H1 (cell line): ENCODE measurements at regions of chr1 and their contacts with region 1.

Region 1: GRCh38 chr1:171801487-171801891 is 20.0 kb downstream of the METTL13 start:
- DNase-seq: no peak
- H3K4me3 ChIP-seq: no peak overlapping the region
- H3K27ac ChIP-seq: no peak overlapping the region
- H3K4me1 ChIP-seq: peaks cover 0 to 11% (median 5%) of the 10 kb centered on the region in 4 experiments; a peak in 3 of 7 replicates
- H3K27me3 ChIP-seq: no peaks in the 10 kb centered on the region
- CTCF ChIP-seq: peak in 2 of 3 experiments; percentile 75 to 87; a peak in 3 of 4 replicates
- EP300 ChIP-seq: no peak
- POLR2A ChIP-seq: no peak
- RAD21 ChIP-seq: peak; percentile 87 to 94

Region 2: DNA sequence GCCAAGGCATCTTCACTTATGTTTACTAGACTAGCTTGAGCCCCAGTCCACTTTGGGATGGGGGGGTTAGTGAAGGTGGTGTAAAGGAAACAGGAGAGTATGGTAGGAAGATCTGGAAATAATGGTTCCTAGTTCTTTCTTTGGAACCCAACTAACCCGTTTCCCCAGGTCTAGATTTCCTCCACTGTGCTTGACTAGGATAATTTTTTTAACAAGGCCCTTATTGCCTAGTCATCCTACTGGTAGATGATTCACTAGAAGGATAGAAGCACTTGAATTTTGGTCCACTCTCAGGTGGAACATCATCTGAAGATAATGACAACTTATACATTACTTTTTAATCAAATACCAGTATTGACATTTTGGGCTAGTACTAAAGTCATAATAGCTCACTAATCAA is 225.3 kb before region 1 on chr1:
- CTCF ChIA-PET with region 1: no interaction called
- POLR2A ChIA-PET with region 1: no interaction called
- DNase-seq: no peak
- H3K4me3 ChIP-seq: no peak overlapping the region
- H3K27ac ChIP-seq: no peak overlapping the region
- H3K4me1 ChIP-seq: no peaks in the 10 kb centered on the region
- H3K27me3 ChIP-seq: no peaks in the 10 kb centered on the region
- CTCF ChIP-seq: no peak
- EP300 ChIP-seq: no peak
- POLR2A ChIP-seq: no peak
- RAD21 ChIP-seq: no peak

Region 3: DNA sequence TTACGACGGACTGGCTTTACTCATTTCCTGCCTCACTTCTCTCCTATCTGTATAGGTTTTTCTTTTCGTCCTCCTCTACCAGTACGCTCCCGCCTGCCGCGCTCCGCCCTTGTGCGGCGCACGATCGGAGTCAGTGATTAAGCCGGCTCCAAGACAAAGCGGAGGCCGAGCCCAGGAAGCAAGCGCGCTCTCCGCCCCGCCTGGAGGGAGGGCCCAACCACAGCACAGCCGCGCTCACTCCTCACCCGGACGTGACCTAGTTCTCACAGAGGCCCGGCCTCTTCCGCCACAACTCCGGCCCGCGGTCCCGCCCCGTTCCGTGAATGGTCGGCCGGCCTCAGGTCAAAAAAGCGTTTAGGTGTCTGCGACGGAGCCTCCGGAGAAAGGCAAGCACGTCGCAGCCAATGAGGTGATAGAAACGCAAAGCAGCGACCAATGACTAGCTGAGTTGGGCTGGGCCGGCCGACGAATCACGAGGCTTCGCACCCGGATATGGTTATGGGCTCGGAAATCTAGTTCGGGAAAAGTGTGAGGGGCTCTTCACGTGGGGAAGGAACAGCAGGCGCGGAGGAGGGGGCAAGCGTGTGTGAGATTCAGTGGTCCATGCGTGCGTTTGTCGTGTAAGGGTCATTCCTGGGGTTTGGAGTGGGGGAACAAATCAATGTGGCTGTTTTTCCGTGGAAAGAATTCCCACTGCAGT is 20.2 kb before region 1 on chr1 and contains the start of gene METTL13:
- CTCF ChIA-PET with region 1: interaction called, 24 read pairs
- POLR2A ChIA-PET with region 1: interaction called, 4 read pairs
- DNase-seq: peak; percentile 94 to 98
- H3K4me3 ChIP-seq: peak within 1 kb of the TSS; percentile 93 to 98 (median 95)
- H3K27ac ChIP-seq: peak within 1 kb of the TSS; percentile 68; the same call in 1 of the 2 replicates
- H3K4me1 ChIP-seq: peaks cover 0 to 4% (median 2%) of the 10 kb centered on the region in 4 experiments; a peak in 4 of 7 replicates
- H3K27me3 ChIP-seq: no peaks in the 10 kb centered on the region
- CTCF ChIP-seq: no peak
- EP300 ChIP-seq: peak in 1 of 2 experiments; percentile 20; a peak in 1 of 3 replicates
- POLR2A ChIP-seq: peak; percentile 73 to 88
- RAD21 ChIP-seq: no peak
- total RNA-seq, gene METTL13: 63.1 and 66.3 TPM in 2 replicates

Region 4: DNA sequence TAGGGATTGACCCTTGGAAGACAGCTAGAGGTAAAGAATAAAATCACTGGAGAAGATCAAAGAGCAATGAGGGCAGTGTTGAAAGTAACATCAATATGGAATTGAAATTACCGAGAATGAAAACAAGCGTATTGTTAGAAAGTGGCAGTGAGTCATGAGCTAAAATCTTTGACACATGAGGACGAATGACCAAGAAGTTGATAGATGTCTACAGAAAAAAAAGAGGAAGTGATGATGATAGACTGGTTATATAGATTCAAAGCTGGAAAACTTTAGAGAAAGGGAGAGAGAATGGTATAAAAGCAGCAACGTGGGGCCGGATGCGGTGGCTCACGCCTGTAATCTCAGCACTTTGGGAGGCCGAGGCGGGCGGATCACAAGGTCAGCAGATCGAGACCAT is 27.3 kb after region 1 on chr1:
- CTCF ChIA-PET with region 1: interaction called, 13 read pairs
- POLR2A ChIA-PET with region 1: no interaction called
- DNase-seq: no peak
- H3K4me3 ChIP-seq: no peak overlapping the region
- H3K27ac ChIP-seq: no peak overlapping the region
- H3K4me1 ChIP-seq: no peaks in the 10 kb centered on the region
- H3K27me3 ChIP-seq: no peaks in the 10 kb centered on the region
- CTCF ChIP-seq: no peak
- EP300 ChIP-seq: no peak
- POLR2A ChIP-seq: no peak
- RAD21 ChIP-seq: no peak

Region 5: DNA sequence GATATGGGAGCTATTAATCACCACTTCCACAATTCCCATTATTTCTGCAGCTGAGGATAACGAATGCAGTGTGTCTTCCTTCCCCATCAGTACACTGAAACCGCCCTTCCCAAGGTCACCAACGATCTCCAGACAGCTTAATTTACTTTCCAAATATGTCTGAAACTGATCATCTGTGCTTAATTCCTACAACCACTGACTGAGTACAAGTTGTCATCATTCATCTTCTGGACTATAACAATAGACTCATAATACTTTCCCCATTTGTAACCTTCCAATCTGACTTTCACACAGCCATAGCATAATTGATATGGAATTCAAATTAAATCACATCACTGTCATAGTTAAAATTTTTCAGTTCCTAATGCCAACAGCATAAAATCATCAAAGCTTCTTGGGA is 57.2 kb after region 1 on chr1:
- CTCF ChIA-PET with region 1: interaction called, 22 read pairs
- POLR2A ChIA-PET with region 1: no interaction called
- DNase-seq: no peak
- H3K4me3 ChIP-seq: no peak overlapping the region
- H3K27ac ChIP-seq: no peak overlapping the region
- H3K4me1 ChIP-seq: no peaks in the 10 kb centered on the region
- H3K27me3 ChIP-seq: no peaks in the 10 kb centered on the region
- CTCF ChIP-seq: no peak
- EP300 ChIP-seq: no peak
- POLR2A ChIP-seq: no peak
- RAD21 ChIP-seq: no peak

Region 6: GRCh38 chr1:171948511-171948910 is 147.0 kb after region 1 on chr1:
- CTCF ChIA-PET with region 1: interaction called, 12 read pairs
- POLR2A ChIA-PET with region 1: no interaction called
- DNase-seq: no peak
- H3K4me3 ChIP-seq: no peak overlapping the region
- H3K27ac ChIP-seq: no peak overlapping the region
- H3K4me1 ChIP-seq: peaks cover 0 to 7% (median 4%) of the 10 kb centered on the region in 4 experiments; a peak in 2 of 7 replicates
- H3K27me3 ChIP-seq: no peaks in the 10 kb centered on the region; a peak in 1 of 7 replicates
- CTCF ChIP-seq: no peak
- EP300 ChIP-seq: no peak
- POLR2A ChIP-seq: no peak
- RAD21 ChIP-seq: no peak

Region 7: GRCh38 chr1:172002725-172003345 is 201.3 kb after region 1 on chr1:
- CTCF ChIA-PET with region 1: interaction called, 59 read pairs
- POLR2A ChIA-PET with region 1: no interaction called
- DNase-seq: no peak
- H3K4me3 ChIP-seq: no peak overlapping the region
- H3K27ac ChIP-seq: no peak overlapping the region
- H3K4me1 ChIP-seq: no peaks in the 10 kb centered on the region
- H3K27me3 ChIP-seq: no peaks in the 10 kb centered on the region
- CTCF ChIP-seq: peak in 2 of 3 experiments; percentile 52 to 57; a peak in 3 of 4 replicates
- EP300 ChIP-seq: no peak
- POLR2A ChIP-seq: no peak
- RAD21 ChIP-seq: peak; percentile 71 to 77